MCF 10A (cell line): ENCODE measurements at regions of chr15 and their contacts with region 1.

Region 1: GRCh38 chr15:45166834-45167630 is 20.7 kb downstream of the SHF start:
- DNase-seq: peak; percentile 88
- H3K4me3 Mint-ChIP-seq: peak overlapping the region; percentile 71
- H3K27ac Mint-ChIP-seq: peak overlapping the region; percentile 63
- H3K4me1 Mint-ChIP-seq: peaks cover 19% of the 10 kb centered on the region
- H3K27me3 Mint-ChIP-seq: no peaks in the 10 kb centered on the region
- CTCF ChIP-seq: peak; percentile 70

Region 2: GRCh38 chr15:45118131-45118588 is 48.9 kb before region 1 on chr15:
- CTCF ChIA-PET with region 1: interaction called, 93 read pairs
- POLR2A ChIA-PET with region 1: no interaction called
- intact Hi-C with region 1: no loop called
- DNase-seq: peak; percentile 89
- H3K4me3 Mint-ChIP-seq: no peak overlapping the region
- H3K27ac Mint-ChIP-seq: no peak overlapping the region
- H3K4me1 Mint-ChIP-seq: peaks cover 12% of the 10 kb centered on the region
- H3K27me3 Mint-ChIP-seq: peaks cover 27% of the 10 kb centered on the region
- CTCF ChIP-seq: peak; percentile 96

Region 3: GRCh38 chr15:45141366-45141765 is 25.7 kb before region 1 on chr15:
- CTCF ChIA-PET with region 1: interaction called, 17 read pairs
- POLR2A ChIA-PET with region 1: no interaction called
- intact Hi-C with region 1: no loop called
- DNase-seq: no peak
- H3K4me3 Mint-ChIP-seq: no peak overlapping the region
- H3K27ac Mint-ChIP-seq: peak overlapping the region; percentile 51
- H3K4me1 Mint-ChIP-seq: no peaks in the 10 kb centered on the region
- H3K27me3 Mint-ChIP-seq: no peaks in the 10 kb centered on the region
- CTCF ChIP-seq: no peak

Region 4: GRCh38 chr15:45179221-45179985 is 12.4 kb after region 1 on chr15:
- CTCF ChIA-PET with region 1: interaction called, 44 read pairs
- POLR2A ChIA-PET with region 1: interaction called, 6 read pairs
- intact Hi-C with region 1: no loop called
- DNase-seq: peak; percentile 64
- H3K4me3 Mint-ChIP-seq: no peak overlapping the region
- H3K27ac Mint-ChIP-seq: no peak overlapping the region
- H3K4me1 Mint-ChIP-seq: peaks cover 13% of the 10 kb centered on the region
- H3K27me3 Mint-ChIP-seq: no peaks in the 10 kb centered on the region
- CTCF ChIP-seq: peak; percentile 52

Region 5: DNA sequence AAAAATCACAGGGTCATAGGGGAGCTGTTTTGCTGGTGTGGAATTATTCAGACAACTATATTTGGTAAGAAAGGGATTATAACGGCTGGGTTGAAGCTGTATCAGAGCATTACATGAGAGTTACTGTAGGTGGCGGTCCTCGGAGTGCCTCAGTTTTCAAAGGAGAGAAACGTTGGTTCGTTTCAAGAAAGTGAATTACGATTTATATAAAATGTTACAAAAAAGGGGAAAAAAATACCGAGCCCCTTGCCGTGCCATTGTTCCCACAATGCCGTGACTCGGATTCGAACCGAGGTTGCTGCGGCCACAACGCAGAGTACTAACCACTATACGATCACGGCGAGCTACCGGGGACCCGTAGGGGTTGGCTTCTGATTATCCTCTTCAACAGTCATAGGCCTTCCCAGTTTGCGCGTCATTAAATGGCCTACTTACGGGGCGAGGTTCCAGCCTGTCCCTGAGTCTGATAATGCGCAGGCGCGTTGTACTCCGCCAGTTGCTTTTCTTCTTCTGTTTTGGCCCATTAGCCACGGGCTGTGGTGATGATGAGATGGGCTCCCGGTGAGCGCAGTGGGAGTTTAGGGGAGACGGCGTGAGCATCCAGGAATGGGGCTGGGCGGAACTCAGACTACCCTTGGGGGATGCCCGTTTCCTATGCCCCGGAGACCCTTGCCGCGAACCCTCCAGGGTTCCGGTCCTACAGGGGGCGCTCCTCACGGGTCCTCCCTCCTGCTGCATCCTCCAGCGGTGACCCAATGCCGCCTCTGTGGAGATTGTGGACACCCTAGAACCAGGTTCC is 31.5 kb after region 1 on chr15:
- CTCF ChIA-PET with region 1: interaction called, 94 read pairs
- POLR2A ChIA-PET with region 1: interaction called, 113 read pairs
- intact Hi-C with region 1: loop called (anchors 1 kb)
- DNase-seq: peak; percentile 98
- H3K4me3 Mint-ChIP-seq: no peak overlapping the region
- H3K27ac Mint-ChIP-seq: no peak overlapping the region
- H3K4me1 Mint-ChIP-seq: peaks cover 8% of the 10 kb centered on the region
- H3K27me3 Mint-ChIP-seq: no peaks in the 10 kb centered on the region
- CTCF ChIP-seq: peak; percentile 79

Region 6: DNA sequence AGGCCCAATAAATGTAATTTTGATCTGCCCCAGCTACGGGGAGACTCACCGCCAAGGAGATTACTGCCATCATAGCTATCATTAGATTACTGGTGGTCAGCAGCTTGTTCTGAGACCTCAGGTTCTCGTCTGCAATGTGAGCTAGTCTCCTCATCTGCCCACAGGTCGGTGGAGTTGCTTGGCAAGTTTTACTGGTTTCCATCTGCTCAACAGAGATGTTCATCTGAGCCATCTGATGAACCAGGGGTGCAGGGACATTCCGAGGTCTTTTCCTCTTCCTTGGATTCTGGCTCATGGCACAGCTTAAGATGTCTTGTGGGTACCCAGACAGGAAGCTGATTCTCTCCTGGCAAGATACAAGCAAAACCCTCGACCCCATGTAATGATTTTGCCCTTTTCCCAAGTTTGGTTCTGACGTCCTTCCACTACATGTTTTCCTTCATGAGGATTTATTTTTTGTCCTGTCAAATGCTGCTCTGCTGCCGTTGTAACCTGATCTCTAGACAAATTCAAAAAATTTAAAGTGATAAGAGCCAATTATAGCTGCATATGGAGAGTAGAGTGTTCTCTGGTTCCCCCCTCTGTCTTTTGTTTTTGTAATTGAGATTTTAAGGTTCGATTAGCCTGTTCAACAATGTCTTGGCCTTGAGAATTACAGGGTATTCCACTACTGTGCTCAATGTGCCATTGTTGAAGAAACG is 69.9 kb after region 1 on chr15:
- CTCF ChIA-PET with region 1: no interaction called
- POLR2A ChIA-PET with region 1: no interaction called
- intact Hi-C with region 1: no loop called
- DNase-seq: no peak
- H3K4me3 Mint-ChIP-seq: no peak overlapping the region
- H3K27ac Mint-ChIP-seq: no peak overlapping the region
- H3K4me1 Mint-ChIP-seq: no peaks in the 10 kb centered on the region
- H3K27me3 Mint-ChIP-seq: no peaks in the 10 kb centered on the region
- CTCF ChIP-seq: no peak

Region 7: GRCh38 chr15:45279024-45279698 is 112.1 kb after region 1 on chr15:
- CTCF ChIA-PET with region 1: interaction called, 13 read pairs
- POLR2A ChIA-PET with region 1: interaction called, 5 read pairs
- intact Hi-C with region 1: no loop called
- DNase-seq: peak; percentile 98
- H3K4me3 Mint-ChIP-seq: peak overlapping the region; percentile 75
- H3K27ac Mint-ChIP-seq: peak overlapping the region; percentile 51
- H3K4me1 Mint-ChIP-seq: no peaks in the 10 kb centered on the region
- H3K27me3 Mint-ChIP-seq: no peaks in the 10 kb centered on the region
- CTCF ChIP-seq: no peak

Region 8: GRCh38 chr15:45402162-45402954 is 235.3 kb after region 1 on chr15:
- CTCF ChIA-PET with region 1: interaction called, 39 read pairs
- POLR2A ChIA-PET with region 1: interaction called, 15 read pairs
- intact Hi-C with region 1: loop called (anchors 1 kb)
- DNase-seq: peak; percentile 99
- H3K4me3 Mint-ChIP-seq: peak overlapping the region; percentile 91
- H3K27ac Mint-ChIP-seq: peak overlapping the region; percentile 88
- H3K4me1 Mint-ChIP-seq: peaks cover 27% of the 10 kb centered on the region
- H3K27me3 Mint-ChIP-seq: no peaks in the 10 kb centered on the region
- CTCF ChIP-seq: no peak